H1 (cell line): ENCODE measurements at regions of chr1 and their contacts with region 1.

Region 1: GRCh38 chr1:11571906-11572616 is 82.2 kb downstream of the FBXO2 start:
- DNase-seq: peak; percentile 34 to 85
- H3K4me3 ChIP-seq: no peak overlapping the region
- H3K27ac ChIP-seq: no peak overlapping the region
- H3K4me1 ChIP-seq: no peaks in the 10 kb centered on the region
- H3K27me3 ChIP-seq: no peaks in the 10 kb centered on the region
- CTCF ChIP-seq: peak; percentile 30 to 65 (median 59)
- EP300 ChIP-seq: no peak
- POLR2A ChIP-seq: no peak
- RAD21 ChIP-seq: peak; percentile 28 to 63; a peak in 2 of 4 replicates

Region 2: DNA sequence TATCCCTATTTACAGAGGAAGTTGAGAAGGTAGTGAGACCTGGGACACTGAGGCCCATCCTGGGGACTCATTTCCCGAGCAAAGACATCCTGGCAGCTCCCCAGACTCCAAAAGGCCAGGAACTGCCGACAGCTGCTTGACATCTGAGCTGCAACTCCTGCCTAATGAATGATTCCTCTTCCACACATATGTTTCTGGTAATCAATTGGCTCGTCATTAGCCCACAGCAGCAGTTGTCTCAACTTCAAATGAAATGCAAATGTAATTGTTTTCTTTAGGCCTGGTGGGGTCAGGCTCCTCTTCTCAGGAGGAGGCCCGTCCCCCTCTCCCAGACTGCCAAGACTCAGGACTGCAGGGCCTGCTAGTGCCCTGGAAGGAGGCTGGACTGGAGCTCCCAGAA is 154.9 kb before region 1 on chr1:
- CTCF ChIA-PET with region 1: interaction called, 10 read pairs
- POLR2A ChIA-PET with region 1: no interaction called
- DNase-seq: no peak
- H3K4me3 ChIP-seq: no peak overlapping the region
- H3K27ac ChIP-seq: no peak overlapping the region
- H3K4me1 ChIP-seq: peaks cover 2 to 16% (median 8%) of the 10 kb centered on the region in 4 experiments; a peak in 6 of 7 replicates
- H3K27me3 ChIP-seq: no peaks in the 10 kb centered on the region; a peak in 1 of 7 replicates
- CTCF ChIP-seq: no peak
- EP300 ChIP-seq: no peak
- POLR2A ChIP-seq: no peak
- RAD21 ChIP-seq: no peak

Region 3: DNA sequence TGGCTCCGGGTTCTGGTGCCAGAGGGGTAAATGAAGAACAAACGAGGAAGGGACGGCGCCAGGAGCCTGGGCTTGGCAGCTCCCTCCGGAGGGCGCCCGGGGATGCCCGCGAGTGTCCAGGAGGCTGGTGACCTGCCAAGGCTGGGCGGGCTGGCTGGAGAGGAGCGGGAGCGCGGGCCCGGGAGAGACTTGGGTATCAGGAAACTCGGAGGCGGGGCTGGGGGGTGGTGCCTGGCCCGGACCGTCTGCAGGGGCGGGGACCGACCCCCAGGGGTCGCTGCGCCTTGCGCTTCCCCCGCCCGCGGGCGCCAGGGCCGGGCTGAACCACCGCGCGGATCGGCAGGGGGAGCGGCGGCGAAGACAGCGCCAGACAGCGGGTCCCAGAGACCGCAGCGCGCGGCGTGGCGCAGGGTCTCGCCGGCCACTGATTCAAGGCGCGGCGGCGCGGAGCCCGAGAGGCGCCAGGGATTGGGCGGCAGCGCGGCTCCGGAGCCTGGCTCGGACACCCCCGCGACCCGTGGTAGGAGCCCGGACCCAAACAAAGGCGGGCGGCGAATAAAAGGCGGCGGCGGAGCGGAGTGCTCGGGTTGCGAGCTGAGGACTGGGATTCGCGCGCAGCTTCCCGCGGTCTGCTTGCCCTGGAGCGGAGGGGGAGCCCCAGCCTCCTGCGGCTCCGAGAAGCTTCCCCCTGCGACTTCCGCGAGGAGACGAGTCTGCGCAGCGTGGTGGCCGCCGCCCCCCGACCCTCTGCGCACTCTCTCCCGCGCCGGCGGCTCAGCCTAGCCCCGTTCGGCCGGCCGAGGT is 93.3 kb before region 1 on chr1 and contains the start of gene DISP3:
- CTCF ChIA-PET with region 1: interaction called, 14 read pairs
- POLR2A ChIA-PET with region 1: interaction called, 5 read pairs
- DNase-seq: peak; percentile 56 to 96
- H3K4me3 ChIP-seq: peak within 1 kb of the TSS; percentile 63 to 75 (median 70)
- H3K27ac ChIP-seq: peak within 1 kb of the TSS; percentile 99
- H3K4me1 ChIP-seq: peaks cover 0 to 4% (median 0%) of the 10 kb centered on the region in 4 experiments; a peak in 2 of 7 replicates
- H3K27me3 ChIP-seq: peaks cover 3 to 26% (median 24%) of the 10 kb centered on the region in 4 experiments
- CTCF ChIP-seq: peak; percentile 68 to 75 (median 73)
- EP300 ChIP-seq: peak in 1 of 2 experiments; percentile 99; a peak in 2 of 3 replicates
- POLR2A ChIP-seq: peak in 1 of 2 experiments; percentile 96; a peak in 2 of 3 replicates
- RAD21 ChIP-seq: peak; percentile 46 to 65
- total RNA-seq, gene DISP3: 4.6 and 5.3 TPM in 2 replicates

Region 4: GRCh38 chr1:11550664-11551283 is 21.3 kb before region 1 on chr1:
- CTCF ChIA-PET with region 1: interaction called, 44 read pairs
- POLR2A ChIA-PET with region 1: no interaction called
- DNase-seq: peak; percentile 56 to 89
- H3K4me3 ChIP-seq: no peak overlapping the region
- H3K27ac ChIP-seq: no peak overlapping the region
- H3K4me1 ChIP-seq: peaks cover 0 to 3% (median 0%) of the 10 kb centered on the region in 4 experiments; a peak in 2 of 7 replicates
- H3K27me3 ChIP-seq: peaks cover 0 to 2% (median 0%) of the 10 kb centered on the region in 4 experiments; a peak in 1 of 7 replicates
- CTCF ChIP-seq: no peak
- EP300 ChIP-seq: no peak
- POLR2A ChIP-seq: no peak
- RAD21 ChIP-seq: peak in 1 of 2 experiments; percentile 13; a peak in 1 of 4 replicates

Region 5: GRCh38 chr1:11594222-11594621 is 22.2 kb after region 1 on chr1:
- CTCF ChIA-PET with region 1: interaction called, 21 read pairs
- POLR2A ChIA-PET with region 1: no interaction called
- DNase-seq: peak in 1 of 2 experiments; percentile 23
- H3K4me3 ChIP-seq: peak overlapping the region in 1 of 4 experiments; percentile 12; a peak in 2 of 8 replicates
- H3K27ac ChIP-seq: no peak overlapping the region
- H3K4me1 ChIP-seq: peaks cover 2 to 8% (median 5%) of the 10 kb centered on the region in 4 experiments
- H3K27me3 ChIP-seq: peaks cover 0 to 3% (median 0%) of the 10 kb centered on the region in 4 experiments; a peak in 1 of 7 replicates
- CTCF ChIP-seq: peak; percentile 46 to 70 (median 54)
- EP300 ChIP-seq: no peak
- POLR2A ChIP-seq: no peak
- RAD21 ChIP-seq: peak; percentile 45 to 49; a peak in 3 of 4 replicates

Region 6: DNA sequence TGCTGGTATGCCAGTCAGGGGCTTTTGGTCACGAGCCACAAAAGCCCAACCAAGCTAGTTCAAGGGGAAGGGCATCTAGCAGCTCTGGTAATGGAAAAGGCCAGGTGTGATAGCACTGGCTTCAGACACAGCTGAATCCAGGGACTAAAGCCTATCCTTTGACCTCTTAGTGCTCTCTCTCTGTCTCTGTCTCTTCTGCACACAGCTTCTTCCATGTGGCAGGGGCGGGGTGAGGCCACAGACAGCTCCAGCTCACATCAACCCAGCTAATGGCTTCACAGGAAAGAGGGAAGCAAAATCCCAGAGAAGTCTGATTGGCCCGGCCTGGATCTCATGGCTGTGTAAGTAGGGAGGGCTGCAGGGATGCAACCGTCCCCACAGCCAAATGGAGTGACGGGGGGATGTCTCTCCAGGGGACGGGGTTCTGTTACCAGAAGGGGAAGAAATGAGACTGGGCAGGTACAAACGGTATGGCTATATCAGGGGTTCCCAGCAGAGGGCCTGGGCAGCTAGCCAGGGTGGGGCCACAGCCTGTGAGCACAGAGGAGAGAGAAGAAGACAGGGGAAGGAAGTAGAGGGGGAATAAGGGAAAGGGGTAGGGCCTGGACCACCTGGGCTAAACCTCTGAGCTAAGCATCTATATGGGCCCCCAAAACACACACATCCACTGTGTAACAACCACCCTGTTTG is 39.7 kb after region 1 on chr1:
- CTCF ChIA-PET with region 1: interaction called, 15 read pairs
- POLR2A ChIA-PET with region 1: no interaction called
- DNase-seq: no peak
- H3K4me3 ChIP-seq: no peak overlapping the region
- H3K27ac ChIP-seq: no peak overlapping the region
- H3K4me1 ChIP-seq: no peaks in the 10 kb centered on the region
- H3K27me3 ChIP-seq: no peaks in the 10 kb centered on the region
- CTCF ChIP-seq: peak in 2 of 3 experiments; percentile 2 to 22; a peak in 3 of 4 replicates
- EP300 ChIP-seq: no peak
- POLR2A ChIP-seq: no peak
- RAD21 ChIP-seq: peak; percentile 11 to 25; a peak in 2 of 4 replicates

Region 7: GRCh38 chr1:11617310-11617709 is 45.2 kb after region 1 on chr1:
- CTCF ChIA-PET with region 1: interaction called, 15 read pairs
- POLR2A ChIA-PET with region 1: no interaction called
- DNase-seq: no peak
- H3K4me3 ChIP-seq: no peak overlapping the region
- H3K27ac ChIP-seq: no peak overlapping the region
- H3K4me1 ChIP-seq: no peaks in the 10 kb centered on the region
- H3K27me3 ChIP-seq: peaks cover 0 to 2% (median 0%) of the 10 kb centered on the region in 4 experiments; a peak in 1 of 7 replicates
- CTCF ChIP-seq: peak in 2 of 3 experiments; percentile 21 to 22; a peak in 2 of 4 replicates
- EP300 ChIP-seq: no peak
- POLR2A ChIP-seq: no peak
- RAD21 ChIP-seq: peak in 1 of 2 experiments; percentile 29; a peak in 1 of 4 replicates